Cardiac septum (tissue), 1 donor: ENCODE measurements at regions of chr3 and their contacts with region 1.

Region 1: GRCh38 chr3:50652709-50653108 is 22.0 kb upstream of the DOCK3 start:
- DNase-seq: no peak

Region 2: DNA sequence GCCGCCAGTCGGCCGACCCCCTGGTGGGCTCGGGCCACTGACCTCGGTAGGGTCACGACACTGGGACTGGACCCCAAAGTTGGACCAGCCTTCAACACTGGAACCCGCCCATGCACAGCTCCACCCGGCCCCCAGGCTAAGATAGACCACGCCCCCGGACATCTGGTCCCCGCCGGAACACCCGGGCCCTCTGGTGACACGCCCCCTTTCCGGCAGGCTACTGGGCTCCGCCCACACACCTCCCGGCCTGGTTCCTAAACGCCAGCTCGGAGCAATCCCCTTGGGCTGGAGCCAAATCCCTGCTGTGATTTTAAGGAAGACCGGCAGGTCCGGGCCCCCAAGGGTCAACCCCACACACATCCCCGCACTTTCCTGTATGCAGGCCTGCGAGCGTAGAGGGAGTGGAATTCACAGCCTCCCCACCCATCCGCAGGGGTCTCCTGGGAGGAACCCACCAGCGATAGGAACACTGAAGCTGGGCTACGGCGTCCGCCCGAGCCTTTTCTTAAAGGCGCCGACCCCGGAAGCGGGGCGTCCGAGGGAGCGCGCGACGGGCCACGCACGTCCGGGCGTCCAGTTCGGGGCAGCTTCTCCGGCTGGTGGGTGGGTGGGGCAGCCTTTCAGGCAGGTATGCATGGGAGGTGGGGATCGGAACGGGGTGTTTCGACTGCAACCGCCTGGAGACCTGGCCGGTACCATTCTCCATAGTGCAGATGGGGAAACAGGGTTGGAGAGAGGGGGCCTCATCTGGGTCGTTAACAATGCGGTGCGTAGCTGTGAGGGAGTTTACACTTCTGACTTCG is 83.6 kb before region 1 on chr3 and contains the start of gene HEMK1:
- intact Hi-C with region 1: loop called (anchors 5 kb)
- DNase-seq: peak; percentile 98
- total RNA-seq, gene HEMK1: 14.4 TPM

Region 3: DNA sequence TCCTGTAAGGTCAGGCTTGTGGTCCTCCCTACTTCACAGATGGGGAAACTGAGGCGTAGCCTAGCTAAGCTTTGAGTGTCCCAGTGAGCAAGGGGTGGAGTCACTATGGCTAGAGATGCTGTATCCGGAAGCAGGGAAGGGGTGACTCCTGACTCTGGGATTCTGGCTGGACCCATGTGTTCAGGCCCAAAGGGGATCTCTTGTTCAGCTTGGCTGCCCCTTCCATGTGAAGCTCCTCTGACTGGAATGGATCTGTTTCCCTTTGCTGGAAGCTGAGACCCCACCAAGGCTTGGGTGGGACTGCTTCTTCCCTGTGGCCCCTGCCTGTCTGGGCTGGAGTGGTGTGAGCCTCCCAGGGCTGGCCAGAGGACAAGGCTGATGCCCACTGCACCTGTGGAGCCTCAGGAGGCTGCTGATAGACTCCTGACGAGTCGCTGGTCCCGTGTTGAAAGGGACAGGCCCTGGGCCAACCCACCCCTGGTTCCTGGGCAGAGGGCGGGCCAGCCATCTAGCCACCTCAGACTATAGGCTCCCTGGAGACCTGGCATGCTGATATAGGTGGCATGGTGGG is 34.7 kb before region 1 on chr3:
- intact Hi-C with region 1: loop called (anchors 2 kb)
- DNase-seq: no peak

Region 4: DNA sequence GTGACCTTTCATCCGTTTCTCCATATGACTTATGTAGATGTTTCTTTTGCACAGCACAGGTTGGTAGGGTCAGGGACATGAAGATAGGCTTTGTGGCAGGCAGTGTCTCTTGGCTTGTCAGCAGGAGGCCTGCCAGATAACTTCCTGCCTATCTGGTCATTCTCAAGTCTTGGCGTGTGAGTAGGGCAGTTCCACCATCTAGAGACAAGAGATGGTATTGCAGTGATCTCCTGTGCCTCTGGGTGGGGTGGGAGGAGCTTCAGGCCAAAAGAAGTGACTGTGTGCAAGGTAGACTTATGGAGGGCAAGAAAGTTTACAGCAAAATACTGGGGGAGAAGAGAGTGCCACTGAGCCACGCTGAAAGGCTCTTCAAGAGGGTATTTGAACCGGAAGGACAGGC is 1029.4 kb after region 1 on chr3:
- intact Hi-C with region 1: no loop called
- DNase-seq: no peak

Region 5: GRCh38 chr3:52204337-52205073 is 1551.8 kb after region 1 on chr3:
- intact Hi-C with region 1: no loop called
- DNase-seq: no peak